Left cardiac atrium (tissue), 4 donors: ENCODE measurements at regions of chr12 and their contacts with region 1.

Region 1: GRCh38 chr12:50637870-50638481 is 125.9 kb upstream of the ATF1 start:
- DNase-seq: no peak
- ATAC-seq: peak in 1 of 2 donors; percentile 32

Region 2: DNA sequence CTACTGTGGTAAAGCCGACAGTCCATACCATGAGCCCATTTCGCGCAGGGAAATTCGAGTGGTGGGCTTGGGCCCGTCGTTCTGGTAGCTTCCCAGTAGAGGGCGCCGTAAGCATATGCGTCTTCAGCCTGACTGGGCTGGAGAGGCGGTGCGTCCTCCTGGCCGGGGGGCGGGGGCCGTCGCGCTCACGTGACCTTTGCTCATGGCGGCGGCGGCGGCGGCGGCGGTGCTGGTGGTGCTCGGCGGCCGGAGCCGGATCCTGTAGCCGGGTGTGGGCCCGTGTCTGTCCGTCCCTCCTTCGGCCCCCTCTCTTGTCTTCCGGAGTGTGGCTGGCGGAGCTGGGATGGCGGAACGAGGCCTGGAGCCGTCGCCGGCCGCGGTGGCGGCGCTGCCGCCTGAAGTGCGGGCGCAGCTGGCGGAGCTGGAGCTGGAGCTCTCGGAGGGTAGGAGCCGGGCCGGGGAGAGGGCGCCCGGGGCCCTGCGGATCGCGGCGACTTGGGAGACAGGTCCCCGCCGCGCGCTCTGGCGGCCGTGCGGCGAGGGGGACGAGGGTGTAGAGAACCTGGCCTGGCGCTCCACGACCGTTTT is 133.1 kb before region 1 on chr12 and contains the start of gene DIP2B:
- intact Hi-C with region 1: loop called (anchors 2 to 5 kb)
- DNase-seq: peak; percentile 96
- ATAC-seq: peak; percentile 98 to 99
- total RNA-seq, gene DIP2B: 12.7 to 12.8 TPM